Activated CD4-positive, alpha-beta T cell treated with anti-CD3 and anti-CD28 coated beads, Interleukin-2, amount 10 ng/mL, durations not matched to agents 24 days and 14 days (primary cell): ENCODE measurements at regions of chr1 and their contacts with region 1.

Region 1: GRCh38 chr1:114745291-114745690 is 12.5 kb downstream of the CSDE1 start:
- DNase-seq: no peak
- H3K4me3 Mint-ChIP-seq: no peak overlapping the region
- H3K27ac Mint-ChIP-seq: peak overlapping the region; percentile 22
- H3K4me1 Mint-ChIP-seq: peaks cover 48% of the 10 kb centered on the region
- H3K27me3 Mint-ChIP-seq: no peaks in the 10 kb centered on the region

Region 2: DNA sequence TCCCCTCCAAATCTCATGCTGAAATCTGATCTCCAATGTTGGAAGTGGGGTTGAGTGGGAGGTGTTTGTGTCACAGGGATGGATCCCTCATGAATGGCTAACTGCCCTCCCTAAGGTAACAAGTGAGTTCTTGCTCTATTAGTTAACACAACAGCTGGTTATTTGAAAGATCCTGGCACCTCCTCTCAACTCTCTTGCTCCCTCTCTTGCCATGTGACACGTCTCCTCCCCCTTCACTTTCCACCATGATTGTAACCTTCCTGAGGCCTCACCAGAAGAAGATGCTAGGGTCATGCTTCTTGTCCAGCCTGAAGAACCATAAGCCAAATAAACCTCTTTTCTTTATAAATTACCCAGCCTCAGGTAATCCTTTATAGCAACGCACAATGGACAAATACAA is 103.9 kb before region 1 on chr1:
- intact Hi-C with region 1: no loop called
- DNase-seq: no peak
- H3K4me3 Mint-ChIP-seq: no peak overlapping the region
- H3K27ac Mint-ChIP-seq: no peak overlapping the region
- H3K4me1 Mint-ChIP-seq: no peaks in the 10 kb centered on the region
- H3K27me3 Mint-ChIP-seq: peaks cover 14% of the 10 kb centered on the region

Region 3: DNA sequence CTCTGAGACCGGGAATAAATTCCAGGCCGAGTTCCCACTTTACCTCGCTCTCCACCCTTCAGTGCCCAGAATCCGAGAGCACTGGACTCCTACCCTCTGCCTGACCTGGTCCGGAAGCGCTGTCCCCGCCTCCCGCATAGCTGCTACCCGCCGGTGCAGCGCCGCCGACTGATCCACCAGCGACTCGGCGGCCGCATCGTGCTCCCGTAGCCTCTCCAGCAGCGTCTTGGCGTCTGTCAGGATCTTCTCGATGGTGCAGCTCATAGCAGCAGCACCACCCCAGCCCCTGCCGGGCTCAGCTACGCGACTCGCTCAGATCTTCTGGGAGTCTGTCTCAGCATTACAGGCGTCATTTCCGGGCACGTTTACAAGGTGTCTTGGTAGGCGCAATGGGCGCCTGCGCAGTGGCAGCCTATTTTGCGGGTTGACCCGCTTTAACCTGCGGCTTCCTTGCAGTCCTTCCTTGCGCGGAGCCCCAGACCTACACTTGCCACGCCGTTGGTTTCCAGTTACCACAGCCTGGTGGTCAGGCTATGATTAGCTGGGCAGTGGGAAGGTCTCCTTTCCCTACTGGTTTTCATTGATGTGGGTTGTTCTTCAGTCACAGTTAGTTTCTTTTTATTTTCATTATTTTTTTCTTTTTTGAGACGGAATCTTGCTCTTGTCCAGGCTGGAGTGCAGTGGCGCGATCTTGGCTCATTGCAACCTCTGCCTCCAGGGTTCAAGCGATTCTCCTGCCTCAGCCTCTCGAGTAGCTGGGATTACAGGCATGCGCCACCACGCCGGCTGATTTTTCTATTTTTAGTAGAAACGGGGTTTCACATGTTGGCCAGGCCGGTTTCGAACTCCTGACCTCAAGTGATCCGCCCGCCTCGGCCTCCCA is 35.3 kb after region 1 on chr1 and contains the start of gene SIKE1:
- intact Hi-C with region 1: loop called (anchors 1 kb)
- DNase-seq: peak; percentile 98
- H3K4me3 Mint-ChIP-seq: peak within 1 kb of the TSS; percentile 100
- H3K27ac Mint-ChIP-seq: peak within 1 kb of the TSS; percentile 99
- H3K4me1 Mint-ChIP-seq: peaks cover 18% of the 10 kb centered on the region
- H3K27me3 Mint-ChIP-seq: peaks cover 8% of the 10 kb centered on the region
- total RNA-seq, gene SIKE1: 64.4 and 65.8 TPM in 2 replicates